HCT116 (cell line): ENCODE measurements at regions of chrX and their contacts with region 1.

Region 1: DNA sequence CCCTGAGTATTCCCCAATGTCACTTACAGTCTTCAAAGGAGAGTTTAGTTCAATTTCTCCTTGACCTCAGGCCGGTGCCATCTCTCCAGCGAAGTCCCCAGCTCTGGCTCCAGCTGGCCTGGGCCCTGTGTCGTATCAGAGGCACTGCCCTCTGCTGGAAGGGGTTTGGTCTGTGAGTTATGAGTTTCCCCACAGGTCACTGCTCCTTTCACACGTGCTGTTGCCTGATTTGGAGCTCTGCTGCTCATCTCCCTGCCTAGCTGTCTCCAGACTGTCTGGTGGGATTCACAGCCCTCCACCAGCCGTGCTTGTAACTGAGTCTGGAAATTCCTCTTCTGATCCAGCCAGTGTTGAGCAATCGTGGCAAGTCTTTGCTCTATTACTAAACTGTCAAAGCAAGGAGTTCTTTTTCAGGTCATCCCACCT is at the start of gene RAP2C:
- DNase-seq: peak; percentile 53
- ATAC-seq: peak; percentile 64
- H3K4me3 ChIP-seq: peak within 1 kb of the TSS; percentile 61 to 72
- H3K27ac ChIP-seq: peak within 1 kb of the TSS; percentile 58
- H3K4me1 ChIP-seq: peaks cover 0 to 11% of the 10 kb centered on the region in 2 experiments; a peak in 3 of 4 replicates
- H3K27me3 ChIP-seq: no peaks in the 10 kb centered on the region
- CTCF ChIP-seq: peak; percentile 47 to 60 (median 55); a peak in 5 of 6 replicates
- POLR2A ChIP-seq: no peak
- RAD21 ChIP-seq: peak; percentile 57
- total RNA-seq, gene RAP2C: 19.9 TPM

Region 2: DNA sequence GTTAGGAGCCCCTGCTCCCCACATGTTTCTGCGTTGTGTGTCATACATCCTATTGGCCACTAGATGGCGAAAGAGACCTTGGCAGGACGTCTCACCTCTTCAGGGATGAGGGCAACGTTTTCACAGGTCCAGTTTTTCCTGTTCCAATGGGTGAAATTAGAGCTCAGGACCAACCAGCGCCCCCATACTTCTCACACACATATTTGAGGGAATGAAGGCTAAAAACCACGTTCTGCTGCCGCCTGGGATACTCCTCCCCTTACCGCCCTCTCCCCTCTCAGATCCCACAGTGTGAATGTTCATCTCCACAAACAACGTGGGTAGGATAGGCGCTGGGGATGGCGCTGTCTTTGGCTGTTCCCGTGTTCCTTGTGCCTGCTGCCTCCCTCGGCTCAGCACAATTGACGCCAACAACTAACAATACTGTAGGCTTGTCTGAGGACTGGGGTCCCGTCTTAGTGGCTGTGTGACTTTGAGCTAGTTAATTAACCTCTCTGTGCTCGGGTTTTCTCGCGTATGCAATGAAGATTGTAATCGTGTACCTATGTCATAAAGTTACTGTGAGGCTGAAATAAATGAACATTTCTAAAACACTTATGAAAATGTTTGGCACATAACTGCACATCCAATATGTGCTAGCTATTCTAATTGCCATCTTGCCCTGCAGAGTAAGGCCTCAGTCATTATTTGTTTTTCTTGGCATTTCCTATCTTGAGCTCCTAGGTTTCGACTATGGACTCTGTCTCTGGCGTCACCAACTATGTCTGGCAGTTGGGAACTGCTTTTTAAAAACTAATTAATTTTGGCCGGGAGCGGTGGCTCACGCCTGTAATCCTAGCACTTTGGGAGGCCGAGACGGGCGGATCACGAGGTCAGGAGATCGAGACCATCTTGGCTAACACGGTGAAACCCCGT is 377.6 kb before region 1 on chrX:
- CTCF ChIA-PET with region 1: interaction called, 11 read pairs
- POLR2A ChIA-PET with region 1: interaction called, 4 read pairs
- RAD21 ChIA-PET with region 1: interaction called in 1 of 2 experiments, 5 read pairs
- intact Hi-C with region 1: loop called (anchors 1 kb)
- DNase-seq: peak; percentile 40
- ATAC-seq: peak; percentile 95
- H3K4me3 ChIP-seq: no peak overlapping the region
- H3K27ac ChIP-seq: no peak overlapping the region
- H3K4me1 ChIP-seq: peaks cover 0 to 5% of the 10 kb centered on the region in 2 experiments; a peak in 1 of 4 replicates
- H3K27me3 ChIP-seq: no peaks in the 10 kb centered on the region
- CTCF ChIP-seq: peak; percentile 67 to 72 (median 68)
- POLR2A ChIP-seq: no peak
- RAD21 ChIP-seq: peak; percentile 84

Region 3: DNA sequence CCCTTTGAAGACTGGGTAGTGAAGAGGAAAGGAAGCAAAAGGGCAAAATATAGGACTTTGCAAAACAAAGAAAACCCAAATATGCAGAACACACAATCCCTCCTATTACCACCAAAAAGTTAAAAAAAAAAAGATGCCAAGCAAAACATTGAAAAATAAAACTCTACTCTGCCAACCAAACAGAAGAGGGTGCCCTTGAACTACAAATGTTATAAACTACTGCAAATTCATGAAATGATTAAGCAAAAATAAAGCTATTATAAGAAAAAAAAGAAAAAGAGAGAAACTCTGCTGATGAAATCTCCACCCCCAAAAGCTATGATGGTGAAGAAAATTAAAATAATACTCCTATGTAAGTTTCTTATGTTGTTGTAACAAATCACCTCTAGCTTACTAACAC is 364.8 kb before region 1 on chrX:
- CTCF ChIA-PET with region 1: interaction called, 20 read pairs
- POLR2A ChIA-PET with region 1: no interaction called
- RAD21 ChIA-PET with region 1: no interaction called
- intact Hi-C with region 1: no loop called
- DNase-seq: no peak
- ATAC-seq: no peak
- H3K4me3 ChIP-seq: no peak overlapping the region
- H3K27ac ChIP-seq: no peak overlapping the region
- H3K4me1 ChIP-seq: no peaks in the 10 kb centered on the region
- H3K27me3 ChIP-seq: no peaks in the 10 kb centered on the region
- CTCF ChIP-seq: peak in 1 of 3 experiments; percentile 41; a peak in 2 of 6 replicates
- POLR2A ChIP-seq: no peak
- RAD21 ChIP-seq: peak; percentile 55

Region 4: GRCh38 chrX:132022967-132023895 is 196.1 kb before region 1 on chrX and contains the start of gene STK26:
- CTCF ChIA-PET with region 1: no interaction called
- POLR2A ChIA-PET with region 1: no interaction called
- RAD21 ChIA-PET with region 1: no interaction called
- intact Hi-C with region 1: loop called (anchors 2 kb)
- DNase-seq: peak; percentile 43
- ATAC-seq: peak; percentile 86
- H3K4me3 ChIP-seq: peak within 1 kb of the TSS; percentile 60 to 67
- H3K27ac ChIP-seq: peak within 1 kb of the TSS; percentile 90
- H3K4me1 ChIP-seq: peaks cover 0 to 6% of the 10 kb centered on the region in 2 experiments; a peak in 2 of 4 replicates
- H3K27me3 ChIP-seq: no peaks in the 10 kb centered on the region
- CTCF ChIP-seq: no peak
- POLR2A ChIP-seq: no peak
- RAD21 ChIP-seq: no peak
- total RNA-seq, gene STK26: 30.5 TPM

Region 5: GRCh38 chrX:132092439-132093065 is 126.8 kb before region 1 on chrX:
- CTCF ChIA-PET with region 1: interaction called, 38 read pairs
- POLR2A ChIA-PET with region 1: no interaction called
- RAD21 ChIA-PET with region 1: interaction called, 5 to 6 read pairs
- intact Hi-C with region 1: loop called (anchors 1 kb)
- DNase-seq: peak; percentile 52
- ATAC-seq: peak; percentile 96
- H3K4me3 ChIP-seq: no peak overlapping the region
- H3K27ac ChIP-seq: no peak overlapping the region
- H3K4me1 ChIP-seq: no peaks in the 10 kb centered on the region
- H3K27me3 ChIP-seq: no peaks in the 10 kb centered on the region
- CTCF ChIP-seq: peak; percentile 59 to 74 (median 65)
- POLR2A ChIP-seq: no peak
- RAD21 ChIP-seq: peak; percentile 68; the same call in 1 of the 2 replicates

Region 6: GRCh38 chrX:132389480-132389879 is 170.1 kb after region 1 on chrX:
- CTCF ChIA-PET with region 1: no interaction called
- POLR2A ChIA-PET with region 1: no interaction called
- RAD21 ChIA-PET with region 1: no interaction called
- intact Hi-C with region 1: no loop called
- DNase-seq: no peak
- ATAC-seq: no peak
- H3K4me3 ChIP-seq: no peak overlapping the region
- H3K27ac ChIP-seq: no peak overlapping the region
- H3K4me1 ChIP-seq: no peaks in the 10 kb centered on the region
- H3K27me3 ChIP-seq: no peaks in the 10 kb centered on the region
- CTCF ChIP-seq: no peak
- POLR2A ChIP-seq: no peak
- RAD21 ChIP-seq: no peak